Dorsolateral prefrontal cortex (tissue), 120 donors: ENCODE measurements at regions of chr17 and their contacts with region 1.

Region 1: GRCh38 chr17:56592487-56593085 is 913 bp upstream of the NOG start:
- DNase-seq: peak in 7 of 10 donors; percentile 28 to 82 (median 52)
- H3K4me3 ChIP-seq: peak overlapping the region; percentile 39 to 74 (median 60)
- H3K27ac ChIP-seq: peak overlapping the region in 2 of 59 donors; percentile 27 to 71
- H3K27me3 ChIP-seq: peaks cover 0 to 56% (median 22%) of the 10 kb centered on the region in 45 donors
- CTCF ChIP-seq: peak; percentile 42 to 98 (median 94)

Region 2: GRCh38 chr17:56614522-56614921 is 21.9 kb after region 1 on chr17:
- intact Hi-C with region 1: no loop called
- DNase-seq: no peak
- H3K4me3 ChIP-seq: no peak overlapping the region
- H3K27ac ChIP-seq: no peak overlapping the region
- H3K27me3 ChIP-seq: peaks cover 0 to 3% (median 0%) of the 10 kb centered on the region in 45 donors
- CTCF ChIP-seq: no peak

Region 3: DNA sequence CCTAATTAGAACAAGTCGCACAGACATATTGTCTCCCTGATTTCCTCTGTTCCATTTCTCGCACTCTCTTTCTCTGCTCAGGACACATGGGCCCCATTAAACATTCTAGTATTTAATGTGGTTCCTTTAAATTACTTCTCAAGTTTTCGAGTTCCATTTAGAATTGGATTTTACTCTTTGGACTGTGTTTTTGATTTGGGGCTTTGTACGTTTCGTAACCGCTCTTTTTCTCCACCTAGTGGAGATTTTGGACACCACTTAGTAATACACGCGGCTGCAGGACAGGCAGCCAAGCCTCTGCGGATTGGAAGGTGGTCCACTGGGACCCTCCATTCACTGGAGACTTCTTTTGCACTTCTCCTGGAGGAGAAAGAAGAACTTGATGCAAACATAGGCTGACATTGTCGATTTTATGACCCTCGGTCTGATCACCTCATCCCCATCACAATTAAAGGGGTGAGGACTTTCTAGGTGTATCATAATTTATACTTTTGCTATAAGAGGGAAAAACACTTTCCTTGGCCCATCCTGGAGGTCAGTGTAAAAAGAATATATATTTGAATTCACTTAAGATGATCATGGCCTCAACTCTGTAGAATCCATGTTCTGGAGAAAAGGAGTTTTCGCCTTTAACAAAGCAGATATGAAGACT is 86.7 kb after region 1 on chr17:
- intact Hi-C with region 1: loop called in 1 of 2 experiments (anchors 2 kb)
- DNase-seq: no peak
- H3K4me3 ChIP-seq: peak overlapping the region; percentile 2 to 68 (median 47)
- H3K27ac ChIP-seq: no peak overlapping the region
- H3K27me3 ChIP-seq: peaks cover 0 to 83% (median 25%) of the 10 kb centered on the region in 45 donors
- CTCF ChIP-seq: peak; percentile 40 to 75 (median 62)

Region 4: GRCh38 chr17:56715613-56716357 is 123.2 kb after region 1 on chr17:
- intact Hi-C with region 1: loop called (anchors 1 to 5 kb)
- DNase-seq: peak; percentile 64 to 87 (median 79)
- H3K4me3 ChIP-seq: no peak overlapping the region
- H3K27ac ChIP-seq: no peak overlapping the region
- H3K27me3 ChIP-seq: peaks cover 0 to 12% (median 0%) of the 10 kb centered on the region in 45 donors
- CTCF ChIP-seq: peak; percentile 49 to 96 (median 88)

Region 5: DNA sequence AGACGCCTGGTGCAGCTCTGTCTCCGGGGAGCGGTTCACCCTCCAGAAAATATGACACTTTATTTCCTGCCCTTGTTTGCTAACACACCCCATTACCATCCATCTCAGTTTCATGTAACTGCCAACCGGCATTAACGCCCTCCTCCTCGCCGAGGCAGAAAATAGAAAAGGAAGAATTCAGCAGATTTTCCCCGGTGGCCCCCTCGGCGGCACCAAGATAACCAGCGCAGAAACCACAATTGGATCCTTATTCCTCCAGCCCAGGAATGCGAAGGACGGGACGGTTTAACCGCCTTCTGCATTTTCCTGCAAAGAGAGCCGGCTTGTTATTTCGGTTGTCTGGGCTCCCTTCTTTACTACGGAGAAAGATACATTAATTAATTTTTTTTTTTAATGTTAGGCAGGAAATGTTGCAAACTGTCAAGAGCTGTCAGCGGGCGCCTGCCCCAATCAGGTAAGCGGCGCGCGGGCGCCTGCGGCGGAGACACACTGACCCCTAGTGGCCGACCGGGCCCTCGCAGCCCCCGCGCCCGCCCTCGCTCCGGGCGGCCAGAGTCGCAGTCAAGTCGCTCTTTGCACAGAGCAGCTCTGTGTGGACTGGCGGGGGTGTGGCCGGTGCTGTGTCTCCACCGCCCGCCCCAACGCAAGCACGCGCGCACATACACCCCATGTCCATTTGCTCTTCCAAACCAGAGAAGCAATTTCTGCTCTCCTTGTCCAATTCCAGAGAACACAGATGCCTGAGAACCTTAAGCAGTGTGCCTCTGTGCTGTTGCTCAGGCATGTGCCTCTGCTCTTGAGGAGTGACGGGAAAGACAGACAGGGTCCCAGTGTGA is 187.5 kb after region 1 on chr17:
- intact Hi-C with region 1: loop called (anchors 2 to 5 kb)
- DNase-seq: peak; percentile 63 to 91 (median 74)
- H3K4me3 ChIP-seq: peak overlapping the region in 58 of 59 donors; percentile 12 to 67 (median 46)
- H3K27ac ChIP-seq: no peak overlapping the region
- H3K27me3 ChIP-seq: peaks cover 0 to 17% (median 0%) of the 10 kb centered on the region in 45 donors
- CTCF ChIP-seq: peak; percentile 80 to 100 (median 98)